Astrocyte of the cerebellum (primary cell): ENCODE measurements at regions of chr2 and their contacts with region 1.

Region 1: GRCh38 chr2:230976671-230977171 is 19.2 kb upstream of the SPATA3 start:
- DNase-seq: no peak
- H3K4me3 ChIP-seq: no peak overlapping the region
- CTCF ChIP-seq: no peak

Region 2: GRCh38 chr2:230899287-230899686 is 77.4 kb before region 1 on chr2:
- in situ Hi-C with region 1: loop called (anchors 5 kb)
- DNase-seq: no peak
- H3K4me3 ChIP-seq: no peak overlapping the region
- CTCF ChIP-seq: no peak

Region 3: DNA sequence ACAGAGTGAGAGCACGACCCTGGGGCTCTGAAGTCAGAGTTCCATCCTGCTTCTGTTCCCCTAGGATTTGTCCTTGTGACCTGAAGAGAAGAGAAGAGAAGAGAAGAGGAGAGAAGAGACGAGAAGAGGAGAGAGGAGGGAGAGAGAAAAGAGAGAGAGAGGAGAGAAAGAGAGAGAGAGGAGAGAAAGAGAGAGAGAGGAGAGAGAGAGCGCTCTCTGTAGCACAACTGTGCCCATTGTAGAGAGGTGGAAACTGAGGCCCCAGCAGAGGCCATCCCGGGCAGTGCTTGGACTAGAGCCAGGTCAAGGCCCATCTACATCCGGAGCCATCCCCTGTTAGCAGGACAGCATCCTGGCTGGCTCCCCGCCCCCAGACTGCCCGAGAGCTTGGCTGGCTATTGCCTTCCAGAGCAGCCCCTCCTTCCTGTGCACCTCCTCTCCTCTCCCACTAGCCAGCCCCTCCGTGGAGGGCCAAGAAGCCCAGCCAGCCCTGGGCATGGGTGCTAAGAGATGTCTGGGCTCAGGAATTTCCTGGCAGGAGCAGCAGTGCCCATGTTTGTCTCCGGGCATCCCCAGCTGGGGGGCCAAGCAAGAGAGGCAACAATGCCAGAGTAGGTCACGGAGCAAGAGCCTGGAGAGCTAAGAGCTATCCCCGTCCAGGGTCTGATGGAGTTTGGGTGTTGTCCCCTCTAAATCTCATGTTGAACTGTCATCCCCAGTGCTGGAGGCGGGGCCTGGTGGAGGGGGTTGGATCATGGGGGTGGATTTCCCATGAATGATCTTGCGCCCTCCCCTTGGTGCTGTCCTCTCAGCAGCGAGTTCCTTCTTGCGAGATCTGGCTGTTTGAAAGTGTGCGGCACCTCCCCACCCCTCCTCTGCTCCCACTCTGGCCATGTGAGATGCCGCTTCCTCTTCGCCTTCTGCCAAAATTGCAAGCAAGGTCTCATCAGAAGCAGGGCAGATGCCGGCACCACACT is 33.5 kb before region 1 on chr2:
- in situ Hi-C with region 1: no loop called
- DNase-seq: no peak
- H3K4me3 ChIP-seq: no peak overlapping the region
- CTCF ChIP-seq: no peak

Region 4: GRCh38 chr2:231250161-231250560 is 273.4 kb after region 1 on chr2:
- in situ Hi-C with region 1: no loop called
- DNase-seq: no peak
- H3K4me3 ChIP-seq: no peak overlapping the region
- CTCF ChIP-seq: no peak